Activated CD4-positive, alpha-beta T cell treated with anti-CD3 and anti-CD28 coated beads for 36 hours (primary cell): ENCODE measurements at regions of chr12 and their contacts with region 1.

Region 1: GRCh38 chr12:98373025-98373554 is 142.3 kb upstream of the TMPO start:
- DNase-seq: no peak
- ATAC-seq: no peak
- H3K4me3 Mint-ChIP-seq: no peak overlapping the region
- H3K27ac Mint-ChIP-seq: no peak overlapping the region
- H3K4me1 Mint-ChIP-seq: peaks cover 12% of the 10 kb centered on the region
- H3K27me3 Mint-ChIP-seq: peaks cover 12% of the 10 kb centered on the region

Region 2: DNA sequence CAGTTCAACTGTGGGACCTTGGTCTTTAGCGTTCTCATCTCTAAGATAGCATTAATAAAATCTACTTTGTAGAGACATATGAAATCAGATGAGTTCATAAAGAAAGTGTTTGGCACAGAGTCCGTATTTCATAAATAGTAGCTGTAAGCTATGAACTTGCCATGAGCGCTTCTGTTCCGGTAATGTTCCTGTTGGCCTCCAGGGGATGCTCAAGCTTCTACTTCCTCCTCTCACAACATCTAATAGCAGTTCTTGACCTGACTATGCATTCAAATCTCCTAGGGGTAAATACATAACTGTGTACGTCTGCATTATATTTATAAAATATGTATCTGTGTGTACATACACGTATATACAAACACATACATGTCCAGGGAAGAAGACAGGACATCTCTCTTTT is 145.9 kb before region 1 on chr12:
- CTCF ChIA-PET with region 1: no interaction called
- POLR2A ChIA-PET with region 1: no interaction called
- intact Hi-C with region 1: loop called (anchors 5 to 10 kb)
- DNase-seq: no peak
- ATAC-seq: no peak
- H3K4me3 Mint-ChIP-seq: no peak overlapping the region
- H3K27ac Mint-ChIP-seq: no peak overlapping the region
- H3K4me1 Mint-ChIP-seq: no peaks in the 10 kb centered on the region
- H3K27me3 Mint-ChIP-seq: peaks cover 5% of the 10 kb centered on the region

Region 3: GRCh38 chr12:98483621-98484503 is 110.8 kb after region 1 on chr12:
- CTCF ChIA-PET with region 1: no interaction called
- POLR2A ChIA-PET with region 1: no interaction called
- intact Hi-C with region 1: no loop called
- DNase-seq: no peak
- ATAC-seq: no peak
- H3K4me3 Mint-ChIP-seq: no peak overlapping the region
- H3K27ac Mint-ChIP-seq: no peak overlapping the region
- H3K4me1 Mint-ChIP-seq: no peaks in the 10 kb centered on the region
- H3K27me3 Mint-ChIP-seq: peaks cover 4% of the 10 kb centered on the region

Region 4: GRCh38 chr12:99157946-99158345 is 784.9 kb after region 1 on chr12:
- CTCF ChIA-PET with region 1: no interaction called
- POLR2A ChIA-PET with region 1: interaction called, 11 read pairs
- intact Hi-C with region 1: no loop called
- DNase-seq: no peak
- ATAC-seq: no peak
- H3K4me3 Mint-ChIP-seq: no peak overlapping the region
- H3K27ac Mint-ChIP-seq: no peak overlapping the region
- H3K4me1 Mint-ChIP-seq: no peaks in the 10 kb centered on the region
- H3K27me3 Mint-ChIP-seq: no peaks in the 10 kb centered on the region